ENCODE measurements at regions of chr2 and their contacts with region 1.

Region 1: GRCh38 chr2:176096986-176097819 is 2.4 kb upstream of the HOXD12 start:
- DNase-seq: peak; percentile 48
- ATAC-seq: peak; percentile 95
- H3K4me3 ChIP-seq: peak overlapping the region; percentile 35
- H3K27ac ChIP-seq: no peak overlapping the region
- H3K4me1 ChIP-seq: peaks cover 3% of the 10 kb centered on the region; the same call in 1 of the 2 replicates
- H3K27me3 ChIP-seq: peaks cover 92% of the 10 kb centered on the region
- CTCF ChIP-seq: peak; percentile 76
- POLR2A ChIP-seq: no peak
- RAD21 ChIP-seq: peak; percentile 83

Region 2: DNA sequence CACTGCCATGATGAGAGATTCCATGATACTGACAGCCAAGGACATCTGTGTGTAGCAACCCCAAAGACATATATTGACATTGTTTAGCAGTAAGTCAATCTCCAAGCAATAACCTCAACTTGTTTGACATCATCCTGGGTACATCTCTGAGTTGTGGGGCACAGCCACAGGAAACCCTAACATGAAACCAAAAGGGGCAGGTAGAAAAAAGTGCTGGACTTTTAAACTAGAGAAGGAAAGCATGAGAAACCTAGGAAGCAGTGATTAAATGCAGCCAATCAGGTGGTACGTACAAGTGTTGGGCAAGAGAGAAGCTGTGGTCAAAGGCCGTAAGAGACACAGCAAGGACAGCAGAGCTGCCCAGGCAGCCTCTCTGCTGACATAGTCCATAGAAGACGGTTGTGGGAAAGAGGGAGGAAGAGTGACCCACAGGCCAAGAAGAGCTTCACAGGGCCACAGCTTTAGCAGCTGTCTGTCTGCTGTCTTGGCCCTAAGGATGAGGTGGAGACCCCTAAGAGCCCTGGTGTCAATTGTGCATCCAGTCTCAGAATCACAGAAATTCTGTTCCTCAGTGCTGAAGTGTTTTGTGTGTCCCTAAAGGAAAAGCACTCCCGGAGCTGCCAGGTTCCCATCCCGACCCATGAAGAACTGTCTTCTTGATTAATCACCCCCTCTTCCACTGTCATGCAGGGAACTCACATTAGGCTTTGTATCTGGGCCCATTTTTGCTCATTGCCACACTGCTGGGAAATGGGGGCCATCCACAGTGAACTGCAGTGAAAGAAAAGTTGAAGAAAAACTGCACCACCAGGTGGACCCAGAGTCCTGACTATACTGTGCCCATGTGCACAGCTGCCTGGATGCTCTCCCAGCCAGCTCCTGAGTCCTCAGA is 1066.6 kb before region 1 on chr2:
- CTCF ChIA-PET with region 1: no interaction called
- POLR2A ChIA-PET with region 1: no interaction called
- dilution Hi-C with region 1: no loop called
- in situ Hi-C with region 1: loop called (anchors 25 kb)
- intact Hi-C with region 1: loop called (anchors 2 kb)
- DNase-seq: peak; percentile 58
- ATAC-seq: peak; percentile 96
- H3K4me3 ChIP-seq: no peak overlapping the region
- H3K27ac ChIP-seq: no peak overlapping the region
- H3K4me1 ChIP-seq: peaks cover 2% of the 10 kb centered on the region; the same call in 1 of the 2 replicates
- H3K27me3 ChIP-seq: no peaks in the 10 kb centered on the region
- CTCF ChIP-seq: peak; percentile 51
- POLR2A ChIP-seq: no peak
- RAD21 ChIP-seq: peak; percentile 71

Region 3: GRCh38 chr2:175251425-175252041 is 845.7 kb before region 1 on chr2:
- CTCF ChIA-PET with region 1: interaction called, 13 read pairs
- POLR2A ChIA-PET with region 1: no interaction called
- dilution Hi-C with region 1: no loop called
- in situ Hi-C with region 1: no loop called
- intact Hi-C with region 1: loop called (anchors 5 kb)
- DNase-seq: peak; percentile 40
- ATAC-seq: peak; percentile 62
- H3K4me3 ChIP-seq: no peak overlapping the region
- H3K27ac ChIP-seq: no peak overlapping the region
- H3K4me1 ChIP-seq: no peaks in the 10 kb centered on the region
- H3K27me3 ChIP-seq: peaks cover 9% of the 10 kb centered on the region
- CTCF ChIP-seq: peak; percentile 62
- POLR2A ChIP-seq: no peak
- RAD21 ChIP-seq: peak; percentile 37; the same call in 1 of the 2 replicates

Region 4: GRCh38 chr2:175366815-175367214 is 730.4 kb before region 1 on chr2:
- CTCF ChIA-PET with region 1: interaction called, 4 read pairs
- POLR2A ChIA-PET with region 1: no interaction called
- dilution Hi-C with region 1: no loop called
- in situ Hi-C with region 1: loop called (anchors 10 kb)
- intact Hi-C with region 1: loop called (anchors 1 kb)
- DNase-seq: peak; percentile 43
- ATAC-seq: peak; percentile 91
- H3K4me3 ChIP-seq: no peak overlapping the region
- H3K27ac ChIP-seq: no peak overlapping the region
- H3K4me1 ChIP-seq: no peaks in the 10 kb centered on the region
- H3K27me3 ChIP-seq: peaks cover 6% of the 10 kb centered on the region
- CTCF ChIP-seq: peak; percentile 68
- POLR2A ChIP-seq: no peak
- RAD21 ChIP-seq: peak; percentile 68

Region 5: DNA sequence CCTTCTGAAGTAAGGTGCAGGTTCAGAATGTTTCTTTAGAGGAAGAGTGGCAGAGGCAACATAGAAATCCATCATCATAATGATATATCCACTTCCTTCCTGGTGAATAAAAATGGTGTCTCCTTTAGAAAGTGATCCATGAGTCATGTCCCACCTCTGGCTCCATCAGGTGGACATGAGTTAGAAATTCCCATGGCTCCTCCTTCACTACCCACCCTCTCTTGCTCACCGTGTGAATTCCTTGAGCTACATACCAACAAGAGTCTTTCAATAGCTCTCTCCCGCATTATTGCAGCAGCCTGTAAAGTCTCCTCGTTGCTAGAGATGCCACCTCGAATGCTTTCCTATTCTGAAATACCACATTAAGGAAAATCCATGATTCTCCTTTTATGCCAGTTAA is 412.7 kb before region 1 on chr2:
- CTCF ChIA-PET with region 1: interaction called, 7 read pairs
- POLR2A ChIA-PET with region 1: no interaction called
- dilution Hi-C with region 1: no loop called
- in situ Hi-C with region 1: loop called (anchors 10 kb)
- intact Hi-C with region 1: no loop called
- DNase-seq: no peak
- ATAC-seq: no peak
- H3K4me3 ChIP-seq: no peak overlapping the region
- H3K27ac ChIP-seq: no peak overlapping the region
- H3K4me1 ChIP-seq: no peaks in the 10 kb centered on the region
- H3K27me3 ChIP-seq: no peaks in the 10 kb centered on the region; the same call in 1 of the 2 replicates
- CTCF ChIP-seq: no peak
- POLR2A ChIP-seq: no peak
- RAD21 ChIP-seq: no peak